CD8-positive, alpha-beta T cell (primary cell): ENCODE measurements at regions of chr6 and their contacts with region 1.

Region 1: DNA sequence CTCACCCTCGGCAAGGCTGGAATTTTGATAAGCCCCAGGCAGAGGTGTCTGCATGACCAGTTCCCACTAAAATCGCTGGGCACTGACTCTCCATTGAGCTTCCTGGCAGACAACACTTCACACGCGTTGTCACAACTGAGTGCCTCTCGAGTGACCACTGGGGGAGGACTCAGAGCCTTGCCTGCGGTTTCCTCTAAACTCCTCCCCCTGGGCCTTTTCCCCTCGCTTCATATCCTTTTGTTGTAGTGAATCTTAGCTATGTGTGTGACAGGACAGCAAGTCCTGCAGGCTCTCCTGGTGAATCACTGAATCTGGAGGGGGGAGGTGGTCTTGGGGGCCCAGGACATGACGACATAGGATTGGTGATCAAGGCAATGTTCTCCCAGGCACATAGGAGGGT is 670.8 kb downstream of the PRKN start:
- DNase-seq: no peak
- ATAC-seq: no peak
- H3K4me3 ChIP-seq: no peak overlapping the region
- H3K4me3 Mint-ChIP-seq: no peak overlapping the region
- H3K27ac ChIP-seq: no peak overlapping the region
- H3K27ac Mint-ChIP-seq: no peak overlapping the region
- H3K4me1 ChIP-seq: no peaks in the 10 kb centered on the region
- H3K4me1 Mint-ChIP-seq: no peaks in the 10 kb centered on the region
- H3K27me3 ChIP-seq: no peaks in the 10 kb centered on the region
- H3K27me3 Mint-ChIP-seq: no peaks in the 10 kb centered on the region
- CTCF ChIP-seq: no peak

Region 2: DNA sequence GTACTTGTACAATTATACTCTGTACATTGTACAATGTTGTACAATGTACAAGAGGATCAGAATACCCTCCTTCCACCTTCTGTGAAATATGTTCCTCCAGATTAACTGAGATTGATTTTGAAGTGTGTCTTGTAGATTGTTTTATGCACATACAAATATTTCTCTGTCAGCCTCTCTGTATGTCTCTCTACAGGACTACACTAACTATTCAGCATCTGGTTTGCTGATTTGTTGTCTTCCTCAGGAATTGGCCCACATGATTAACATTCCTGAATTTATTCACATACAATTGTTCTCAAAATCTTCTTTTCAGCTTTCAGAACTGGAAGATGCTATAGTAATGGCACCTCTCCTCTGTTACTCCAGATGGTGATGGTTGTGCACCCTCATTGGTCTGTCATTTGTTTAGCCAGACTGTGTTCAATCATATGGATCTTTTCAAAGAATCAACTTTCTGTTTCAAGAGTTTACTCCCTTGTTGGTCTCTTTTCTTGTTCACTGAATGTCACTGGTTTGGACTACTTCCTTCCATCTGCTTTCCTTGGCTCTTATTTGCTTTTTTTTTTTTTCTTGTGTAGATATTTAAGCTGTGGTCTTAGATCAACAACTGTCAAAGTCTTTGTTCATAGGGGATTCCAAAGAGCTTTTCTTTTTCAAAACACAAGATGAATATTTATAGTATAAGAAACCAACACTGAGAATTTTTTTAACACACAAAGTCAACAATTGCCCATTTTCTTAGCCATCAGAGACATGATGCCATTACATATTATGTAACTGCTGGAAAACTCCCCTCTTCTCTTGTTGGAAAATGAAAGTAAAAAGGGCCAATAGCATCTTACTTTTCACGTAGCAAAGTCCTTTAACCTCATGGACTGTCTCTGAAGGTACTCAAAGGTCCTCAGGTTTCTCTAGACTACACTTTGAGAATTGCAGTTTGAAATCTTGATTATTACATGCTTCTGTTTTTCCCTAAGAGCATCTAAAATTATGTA is 1460.6 kb before region 1 on chr6:
- CTCF ChIA-PET with region 1: no interaction called
- POLR2A ChIA-PET with region 1: no interaction called
- intact Hi-C with region 1: loop called in 1 of 2 experiments (anchors 10 kb)
- DNase-seq: no peak
- ATAC-seq: no peak
- H3K4me3 ChIP-seq: no peak overlapping the region
- H3K4me3 Mint-ChIP-seq: no peak overlapping the region
- H3K27ac ChIP-seq: no peak overlapping the region
- H3K27ac Mint-ChIP-seq: no peak overlapping the region
- H3K4me1 ChIP-seq: no peaks in the 10 kb centered on the region
- H3K4me1 Mint-ChIP-seq: no peaks in the 10 kb centered on the region
- H3K27me3 ChIP-seq: no peaks in the 10 kb centered on the region
- H3K27me3 Mint-ChIP-seq: peaks cover 32% of the 10 kb centered on the region
- CTCF ChIP-seq: no peak

Region 3: DNA sequence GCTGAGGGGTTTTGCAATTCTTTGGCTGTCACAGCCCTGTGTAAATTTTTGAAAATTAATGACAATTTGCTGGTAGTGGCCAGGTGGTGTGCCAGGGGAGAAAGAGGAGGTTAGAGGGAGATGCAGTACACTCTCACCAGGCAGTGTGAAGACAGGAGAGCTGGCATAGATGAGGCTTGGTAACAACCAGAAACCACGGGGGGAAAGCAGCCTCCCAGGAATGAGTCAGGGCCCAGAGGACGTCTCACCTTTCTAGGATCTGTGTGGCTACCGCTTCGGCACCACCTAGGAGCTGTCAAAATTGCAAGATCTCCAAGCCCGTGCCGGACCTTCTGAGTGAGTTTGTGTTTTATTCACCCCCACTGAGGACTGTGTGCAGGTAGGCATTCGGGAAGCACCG is 842.4 kb after region 1 on chr6:
- CTCF ChIA-PET with region 1: no interaction called
- POLR2A ChIA-PET with region 1: no interaction called
- intact Hi-C with region 1: no loop called
- DNase-seq: no peak
- ATAC-seq: no peak
- H3K4me3 ChIP-seq: no peak overlapping the region
- H3K4me3 Mint-ChIP-seq: no peak overlapping the region
- H3K27ac ChIP-seq: no peak overlapping the region
- H3K27ac Mint-ChIP-seq: no peak overlapping the region
- H3K4me1 ChIP-seq: no peaks in the 10 kb centered on the region
- H3K4me1 Mint-ChIP-seq: no peaks in the 10 kb centered on the region
- H3K27me3 ChIP-seq: no peaks in the 10 kb centered on the region
- H3K27me3 Mint-ChIP-seq: no peaks in the 10 kb centered on the region
- CTCF ChIP-seq: no peak